Posterior cingulate gyrus (tissue), 11 donors: ENCODE measurements at regions of chr3 and their contacts with region 1.

Region 1: DNA sequence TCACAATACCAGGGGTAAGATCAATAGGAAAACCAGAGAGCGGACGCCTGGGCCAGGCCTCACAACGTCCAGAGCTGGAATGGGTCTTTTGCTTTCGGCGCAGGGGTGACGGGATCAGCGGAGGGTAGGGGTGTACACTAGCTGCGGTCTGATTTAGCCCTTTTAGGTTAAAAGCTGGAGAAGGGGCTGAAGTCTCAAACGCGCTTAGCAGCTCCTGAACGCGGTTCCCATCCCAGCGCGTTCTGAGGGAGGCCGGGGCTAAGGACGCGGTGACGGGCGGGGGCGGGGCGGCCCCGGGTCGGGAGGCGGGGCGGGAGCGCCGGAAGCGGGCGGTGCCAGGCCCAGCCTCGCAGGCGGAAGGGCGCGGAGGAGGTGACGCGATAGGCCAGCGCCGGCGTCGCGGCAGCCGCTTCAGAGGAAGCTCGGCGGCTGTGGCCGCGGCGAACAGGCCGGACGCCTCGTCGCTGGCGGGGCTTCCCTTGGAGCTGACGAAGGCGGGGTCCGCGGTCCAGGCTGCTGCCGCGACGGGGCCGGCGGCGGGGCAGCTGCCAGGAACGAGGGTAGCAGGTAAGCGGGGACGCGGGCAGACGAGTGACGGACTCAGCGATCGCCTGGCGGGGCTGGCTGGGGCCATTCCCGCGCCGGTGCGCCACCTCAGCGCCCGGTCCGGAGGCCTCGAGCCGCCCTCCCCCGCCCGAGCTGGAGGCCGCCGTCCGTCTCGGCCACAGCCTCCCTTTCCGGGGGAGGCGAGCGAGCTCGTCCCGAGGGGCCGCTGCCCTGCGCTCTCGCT is at the start of gene SENP5:
- DNase-seq: peak; percentile 86 to 98 (median 90)

Region 2: GRCh38 chr3:196440041-196440537 is 427.6 kb before region 1 on chr3:
- intact Hi-C with region 1: no loop called
- DNase-seq: peak in 1 of 10 donors; percentile 26

Region 3: GRCh38 chr3:196513697-196514349 is 353.9 kb before region 1 on chr3:
- intact Hi-C with region 1: no loop called
- DNase-seq: no peak

Region 4: GRCh38 chr3:196537319-196537984 is 330.2 kb before region 1 on chr3:
- intact Hi-C with region 1: no loop called
- DNase-seq: peak in 5 of 10 donors; percentile 17 to 38 (median 34)

Region 5: GRCh38 chr3:196568246-196569002 is 299.3 kb before region 1 on chr3 and contains the starts of genes FBXO45 and WDR53:
- intact Hi-C with region 1: no loop called
- DNase-seq: peak; percentile 92 to 99 (median 94)

Region 6: GRCh38 chr3:196711838-196712513 is 155.7 kb before region 1 on chr3 and contains the starts of genes CEP19 and PIGX:
- intact Hi-C with region 1: loop called (anchors 1 kb)
- DNase-seq: peak; percentile 78 to 99 (median 89)

Region 7: DNA sequence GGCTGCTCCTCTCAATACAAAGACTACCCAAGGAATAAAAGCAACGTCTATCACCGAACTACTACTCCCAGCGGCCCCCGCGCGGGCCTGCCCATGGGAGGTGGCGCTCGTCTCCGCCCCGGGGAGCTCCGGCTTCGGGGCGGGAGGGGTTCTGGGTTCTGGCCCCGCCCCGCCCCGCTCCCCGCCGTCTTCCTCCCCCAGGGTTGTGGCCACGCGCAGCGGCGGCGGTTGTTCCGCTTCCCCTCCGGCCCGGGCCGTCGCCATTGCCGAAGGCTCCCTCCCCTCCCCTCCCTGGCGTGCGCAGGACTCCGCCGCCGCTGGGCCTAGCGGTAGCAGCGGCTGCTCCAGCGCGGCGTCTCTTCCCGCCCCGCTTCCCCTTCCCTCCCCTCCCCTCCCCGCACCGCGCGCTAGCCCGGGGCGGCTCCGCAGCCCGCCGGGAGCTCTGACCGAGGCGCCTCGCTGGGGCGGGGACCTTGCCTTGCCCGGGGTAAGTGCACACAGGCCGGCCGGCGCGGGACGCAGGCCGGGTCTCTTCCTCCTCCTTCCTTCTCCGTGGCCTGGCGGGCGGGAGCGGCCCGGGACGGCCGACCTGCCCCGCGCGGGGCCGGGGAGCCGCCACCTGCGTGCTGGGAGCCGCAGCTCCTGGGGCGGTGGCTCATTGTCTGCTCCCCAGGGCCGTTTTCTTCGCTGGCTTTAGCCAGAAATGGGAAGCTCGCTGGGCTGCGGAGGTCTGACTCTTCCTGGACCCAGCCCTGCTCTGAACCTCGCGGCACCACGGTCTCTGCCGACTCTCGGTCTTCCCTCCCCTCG is 127.8 kb before region 1 on chr3 and contains the start of gene PAK2:
- intact Hi-C with region 1: loop called (anchors 5 kb)
- DNase-seq: peak; percentile 87 to 99 (median 94)